Prostate gland (tissue), 2 donors: ENCODE measurements at regions of chr10 and their contacts with region 1.

Region 1: GRCh38 chr10:24617771-24618391 is 105.8 kb downstream of the ARHGAP21 start:
- DNase-seq: peak; percentile 7
- H3K4me3 ChIP-seq: no peak overlapping the region
- H3K27ac ChIP-seq: no peak overlapping the region
- H3K4me1 ChIP-seq: no peaks in the 10 kb centered on the region
- H3K27me3 ChIP-seq: no peaks in the 10 kb centered on the region
- CTCF ChIP-seq: peak; percentile 21 to 72 (median 47)
- POLR2A ChIP-seq: no peak

Region 2: GRCh38 chr10:24463611-24464426 is 154.1 kb before region 1 on chr10:
- intact Hi-C with region 1: no loop called
- DNase-seq: peak; percentile 61
- H3K4me3 ChIP-seq: no peak overlapping the region
- H3K27ac ChIP-seq: peak overlapping the region; percentile 87 to 88
- H3K4me1 ChIP-seq: peaks cover 2% of the 10 kb centered on the region
- H3K27me3 ChIP-seq: no peaks in the 10 kb centered on the region
- CTCF ChIP-seq: no peak
- POLR2A ChIP-seq: no peak

Region 3: GRCh38 chr10:25080880-25081581 is 463.1 kb after region 1 on chr10:
- intact Hi-C with region 1: loop called (anchors 10 kb)
- DNase-seq: peak; percentile 82
- H3K4me3 ChIP-seq: no peak overlapping the region
- H3K27ac ChIP-seq: peak overlapping the region in 1 of 2 donors; percentile 45
- H3K4me1 ChIP-seq: no peaks in the 10 kb centered on the region
- H3K27me3 ChIP-seq: no peaks in the 10 kb centered on the region
- CTCF ChIP-seq: peak; percentile 51 to 88 (median 80)
- POLR2A ChIP-seq: no peak